Body of pancreas (tissue), 4 donors: ENCODE measurements at regions of chr2 and their contacts with region 1.

Region 1: GRCh38 chr2:66574701-66575624 is 140.0 kb downstream of the MEIS1 start:
- DNase-seq: peak; percentile 72 to 82 (median 78)
- ATAC-seq: peak; percentile 42
- H3K4me3 ChIP-seq: peak overlapping the region; percentile 31 to 36
- H3K27ac ChIP-seq: peak overlapping the region; percentile 92 to 98 (median 97)
- H3K4me1 ChIP-seq: peaks cover 40% of the 10 kb centered on the region
- H3K27me3 ChIP-seq: no peaks in the 10 kb centered on the region
- CTCF ChIP-seq: peak; percentile 13 to 75 (median 53)
- POLR2A ChIP-seq: peak in 2 of 3 donors; percentile 33 to 46

Region 2: GRCh38 chr2:66317268-66317890 is 257.6 kb before region 1 on chr2:
- intact Hi-C with region 1: no loop called
- DNase-seq: no peak
- ATAC-seq: no peak
- H3K4me3 ChIP-seq: no peak overlapping the region
- H3K27ac ChIP-seq: no peak overlapping the region
- H3K4me1 ChIP-seq: no peaks in the 10 kb centered on the region
- H3K27me3 ChIP-seq: no peaks in the 10 kb centered on the region
- CTCF ChIP-seq: no peak
- POLR2A ChIP-seq: no peak

Region 3: GRCh38 chr2:66423391-66424124 is 151.4 kb before region 1 on chr2:
- intact Hi-C with region 1: no loop called
- DNase-seq: no peak
- ATAC-seq: no peak
- H3K4me3 ChIP-seq: no peak overlapping the region
- H3K27ac ChIP-seq: no peak overlapping the region
- H3K4me1 ChIP-seq: peaks cover 11% of the 10 kb centered on the region
- H3K27me3 ChIP-seq: no peaks in the 10 kb centered on the region
- CTCF ChIP-seq: no peak
- POLR2A ChIP-seq: no peak

Region 4: DNA sequence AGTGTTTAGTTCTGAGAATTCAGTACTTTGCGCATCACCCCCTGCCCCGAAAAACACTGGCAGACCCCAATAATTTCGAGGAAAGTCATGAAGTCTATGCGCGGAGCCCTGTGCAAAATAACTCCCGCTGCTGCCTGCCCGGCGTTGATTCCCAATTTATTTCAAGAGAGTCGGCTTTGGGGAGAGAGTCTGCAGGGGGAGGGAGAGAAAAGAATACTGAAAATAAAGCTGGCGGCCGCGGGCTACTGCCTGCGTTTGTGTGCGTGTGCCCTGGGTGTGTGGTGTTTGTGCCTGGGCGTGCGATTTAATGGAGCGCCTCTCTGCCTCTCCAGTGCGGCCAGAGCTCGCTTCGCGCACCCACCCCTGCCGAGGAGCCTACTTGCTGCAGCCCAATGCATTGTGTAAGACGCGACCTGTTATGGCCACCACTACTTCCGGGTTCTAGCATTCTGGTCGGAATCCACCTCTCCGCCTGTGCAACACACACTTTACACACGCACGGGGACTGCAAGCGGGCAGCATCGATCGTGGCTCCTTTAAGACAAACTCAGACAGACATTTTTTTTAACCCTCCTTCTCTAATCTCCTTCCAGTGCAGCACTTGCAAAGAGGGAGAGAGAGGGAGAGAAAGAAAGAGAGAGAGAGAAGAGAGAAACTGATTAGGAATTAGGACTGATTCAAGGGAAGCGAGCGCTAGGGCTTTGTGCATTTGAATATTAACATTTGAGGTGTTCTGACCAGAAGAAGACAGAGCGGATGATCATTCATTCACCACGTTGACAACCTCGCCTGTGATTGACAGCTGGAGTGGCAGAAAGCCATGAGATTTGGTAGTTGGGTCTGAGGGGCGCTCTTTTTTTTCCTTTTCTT is 140.0 kb before region 1 on chr2 and contains the start of gene MEIS1:
- intact Hi-C with region 1: loop called (anchors 5 kb)
- DNase-seq: peak; percentile 96 to 98 (median 97)
- ATAC-seq: peak; percentile 79
- H3K4me3 ChIP-seq: peak within 1 kb of the TSS; percentile 65 to 90
- H3K27ac ChIP-seq: peak within 1 kb of the TSS; percentile 89 to 98 (median 93)
- H3K4me1 ChIP-seq: peaks cover 9% of the 10 kb centered on the region
- H3K27me3 ChIP-seq: no peaks in the 10 kb centered on the region
- CTCF ChIP-seq: peak in 2 of 7 experiments; percentile 11 to 14
- POLR2A ChIP-seq: peak; percentile 97 to 100 (median 100)
- total RNA-seq, gene MEIS1: 82.1 to 84.6 TPM

Region 5: DNA sequence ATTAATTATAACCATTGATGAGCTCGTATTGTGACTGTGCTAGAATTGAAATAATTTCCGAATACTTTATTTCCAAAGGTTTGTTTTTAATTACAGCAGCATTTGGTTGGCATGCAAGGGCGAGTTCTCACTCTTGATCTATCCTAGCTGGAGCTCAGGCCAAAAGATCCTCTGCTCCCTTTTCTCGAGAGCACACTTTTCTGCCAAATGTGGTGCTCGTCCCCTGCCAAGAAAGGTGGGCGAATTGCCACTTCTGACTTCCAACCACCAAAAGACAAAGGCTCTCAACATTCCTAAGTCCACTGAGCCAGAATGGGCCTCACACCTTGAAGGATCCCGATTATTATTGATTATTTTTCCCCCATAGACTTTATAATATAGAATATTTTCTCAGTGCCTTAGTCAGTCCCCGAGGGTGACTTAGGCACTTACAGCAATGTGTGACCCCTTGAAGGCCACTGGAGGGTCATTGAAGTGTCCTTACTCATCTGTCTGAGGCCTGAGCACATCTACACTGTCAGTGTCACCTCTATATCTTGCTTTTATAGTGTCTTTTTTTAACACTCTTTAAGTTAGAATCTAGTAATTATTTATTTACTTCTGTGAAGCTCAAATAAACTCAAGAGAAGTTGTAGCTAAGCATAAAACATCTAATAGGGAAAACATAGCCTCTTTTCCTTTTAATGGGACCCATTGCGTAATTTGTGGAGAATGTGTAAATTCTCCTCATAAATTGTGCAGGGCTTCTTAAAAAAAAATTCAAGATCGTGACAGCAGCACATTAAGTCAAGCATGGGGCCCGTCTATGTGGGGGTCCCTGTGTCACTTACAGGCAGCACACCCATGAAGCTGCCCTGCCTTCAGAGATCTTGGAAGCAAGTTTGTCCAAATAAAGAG is 41.7 kb before region 1 on chr2:
- intact Hi-C with region 1: no loop called
- DNase-seq: no peak
- ATAC-seq: no peak
- H3K4me3 ChIP-seq: no peak overlapping the region
- H3K27ac ChIP-seq: peak overlapping the region in 1 of 4 donors; percentile 35
- H3K4me1 ChIP-seq: peaks cover 42% of the 10 kb centered on the region
- H3K27me3 ChIP-seq: no peaks in the 10 kb centered on the region
- CTCF ChIP-seq: no peak
- POLR2A ChIP-seq: no peak